Thyroid gland (tissue), 4 donors: ENCODE measurements at regions of chr2 and their contacts with region 1.

Region 1: GRCh38 chr2:197191177-197191939 is 119.2 kb downstream of the ANKRD44 start:
- DNase-seq: no peak
- H3K4me3 ChIP-seq: no peak overlapping the region
- H3K27ac ChIP-seq: no peak overlapping the region
- H3K4me1 ChIP-seq: peaks cover 0 to 3% of the 10 kb centered on the region in 2 donors
- H3K27me3 ChIP-seq: no peaks in the 10 kb centered on the region
- CTCF ChIP-seq: peak; percentile 33 to 81 (median 54)
- POLR2A ChIP-seq: no peak

Region 2: DNA sequence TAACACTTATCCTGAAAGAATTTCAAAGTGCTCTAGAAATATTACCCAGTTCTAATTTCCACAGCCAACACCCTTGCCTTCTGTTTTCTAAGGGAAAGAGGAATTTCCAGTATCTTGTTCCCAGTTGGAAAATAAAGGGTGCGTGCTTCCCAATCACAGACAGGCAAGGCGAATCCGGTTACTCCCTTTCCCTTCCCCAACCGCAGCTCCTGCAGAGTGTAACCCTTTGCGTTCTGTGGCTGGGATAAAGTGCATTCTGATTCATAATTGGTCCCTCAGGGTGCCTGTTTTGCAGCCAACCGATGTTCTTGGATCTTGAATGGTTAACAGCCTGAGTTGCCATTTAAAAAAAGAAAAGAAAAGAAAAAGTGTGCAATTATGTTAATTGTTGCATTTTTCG is 224.2 kb before region 1 on chr2:
- intact Hi-C with region 1: no loop called
- DNase-seq: no peak
- H3K4me3 ChIP-seq: no peak overlapping the region
- H3K27ac ChIP-seq: no peak overlapping the region
- H3K4me1 ChIP-seq: no peaks in the 10 kb centered on the region
- H3K27me3 ChIP-seq: no peaks in the 10 kb centered on the region
- CTCF ChIP-seq: no peak
- POLR2A ChIP-seq: no peak

Region 3: GRCh38 chr2:197145471-197146138 is 45.8 kb before region 1 on chr2:
- intact Hi-C with region 1: no loop called
- DNase-seq: no peak
- H3K4me3 ChIP-seq: no peak overlapping the region
- H3K27ac ChIP-seq: no peak overlapping the region
- H3K4me1 ChIP-seq: no peaks in the 10 kb centered on the region
- H3K27me3 ChIP-seq: no peaks in the 10 kb centered on the region
- CTCF ChIP-seq: no peak
- POLR2A ChIP-seq: no peak

Region 4: DNA sequence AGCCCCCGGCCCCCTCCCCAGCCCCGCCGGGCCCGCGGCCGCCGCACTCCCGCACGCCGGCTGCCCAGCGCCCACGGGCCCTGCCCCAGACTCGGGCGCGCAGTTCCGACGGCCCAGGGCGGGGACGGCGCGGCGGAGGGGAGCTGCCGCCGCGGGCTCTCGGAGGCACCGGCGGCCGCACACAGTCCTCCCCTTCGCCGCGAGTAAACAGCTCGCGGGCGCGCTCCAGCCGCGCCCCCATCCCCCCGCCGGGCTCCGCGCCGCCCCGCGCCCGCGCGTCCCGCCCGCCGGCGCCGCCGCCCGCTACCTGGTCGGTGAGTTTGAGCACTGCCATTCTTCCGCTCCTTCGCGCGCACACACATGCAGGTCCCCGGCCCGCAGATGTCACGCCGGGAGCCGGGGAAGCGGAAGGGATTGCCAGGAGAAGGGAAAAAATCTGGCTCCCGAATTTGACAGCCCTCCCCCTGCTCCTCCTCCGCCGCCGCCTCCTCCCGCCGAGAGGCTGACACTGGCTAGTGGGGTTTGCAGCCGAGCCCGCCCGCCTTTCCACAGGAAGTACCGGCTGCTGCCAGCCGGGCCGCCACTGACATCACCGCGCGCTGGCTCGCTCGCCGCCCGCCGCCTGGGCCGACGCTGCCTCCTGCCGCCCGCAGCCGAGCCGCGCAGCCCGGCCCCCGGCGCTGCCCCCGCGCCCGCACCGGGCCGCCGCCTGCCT is 119.1 kb after region 1 on chr2 and contains the start of gene ANKRD44:
- intact Hi-C with region 1: loop called (anchors 5 kb)
- DNase-seq: peak; percentile 88 to 93
- H3K4me3 ChIP-seq: peak within 1 kb of the TSS; percentile 58 to 83 (median 73)
- H3K27ac ChIP-seq: peak within 1 kb of the TSS; percentile 53 to 80 (median 64)
- H3K4me1 ChIP-seq: peaks cover 11 to 21% of the 10 kb centered on the region in 2 donors
- H3K27me3 ChIP-seq: no peaks in the 10 kb centered on the region
- CTCF ChIP-seq: peak in 4 of 6 experiments; percentile 30 to 78 (median 65)
- POLR2A ChIP-seq: peak in 1 of 2 donors; percentile 82
- total RNA-seq, gene ANKRD44: 11.0 to 25.8 (median 23.9) TPM